Upper lobe of right lung (tissue), 1 donor: ENCODE measurements at regions of chr19 and their contacts with region 1.

Region 1: GRCh38 chr19:6297202-6297601 is 17.4 kb upstream of the MLLT1 start:
- DNase-seq: no peak
- ATAC-seq: no peak
- H3K4me3 ChIP-seq: no peak overlapping the region
- H3K27ac ChIP-seq: no peak overlapping the region
- H3K4me1 ChIP-seq: no peaks in the 10 kb centered on the region
- H3K27me3 ChIP-seq: no peaks in the 10 kb centered on the region
- CTCF ChIP-seq: no peak

Region 2: DNA sequence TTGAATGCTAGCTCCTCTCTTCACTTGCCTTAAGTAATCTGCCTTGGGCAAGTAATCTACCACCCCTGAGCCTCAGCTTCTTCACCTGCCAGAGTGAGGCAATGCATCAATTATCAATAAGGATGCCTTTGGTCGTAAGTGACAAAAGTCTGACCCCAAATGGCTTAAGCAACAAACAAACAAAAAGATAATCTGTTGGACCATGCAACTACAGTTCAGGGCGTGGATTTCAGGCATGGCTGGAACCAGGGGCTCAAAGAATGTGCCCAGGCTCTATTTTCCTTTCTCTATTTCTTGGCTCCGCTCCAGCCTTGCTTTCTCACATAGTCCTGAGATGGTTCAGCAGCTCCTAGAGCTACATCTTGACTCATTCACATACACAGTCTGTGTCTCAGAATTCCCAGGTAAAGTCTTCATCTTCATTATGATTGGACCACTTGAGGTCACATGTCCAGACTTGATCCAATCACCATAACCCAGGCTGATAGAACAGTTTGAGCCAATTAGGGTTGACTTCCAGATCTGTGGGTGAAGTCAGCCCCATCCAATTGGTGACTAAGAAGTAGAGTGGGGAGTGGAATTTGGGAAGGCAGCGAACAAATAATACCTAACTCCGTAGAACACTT is 132.2 kb before region 1 on chr19:
- intact Hi-C with region 1: loop called (anchors 5 kb)
- DNase-seq: no peak
- ATAC-seq: no peak
- H3K4me3 ChIP-seq: no peak overlapping the region
- H3K27ac ChIP-seq: no peak overlapping the region
- H3K4me1 ChIP-seq: no peaks in the 10 kb centered on the region
- H3K27me3 ChIP-seq: no peaks in the 10 kb centered on the region
- CTCF ChIP-seq: no peak

Region 3: DNA sequence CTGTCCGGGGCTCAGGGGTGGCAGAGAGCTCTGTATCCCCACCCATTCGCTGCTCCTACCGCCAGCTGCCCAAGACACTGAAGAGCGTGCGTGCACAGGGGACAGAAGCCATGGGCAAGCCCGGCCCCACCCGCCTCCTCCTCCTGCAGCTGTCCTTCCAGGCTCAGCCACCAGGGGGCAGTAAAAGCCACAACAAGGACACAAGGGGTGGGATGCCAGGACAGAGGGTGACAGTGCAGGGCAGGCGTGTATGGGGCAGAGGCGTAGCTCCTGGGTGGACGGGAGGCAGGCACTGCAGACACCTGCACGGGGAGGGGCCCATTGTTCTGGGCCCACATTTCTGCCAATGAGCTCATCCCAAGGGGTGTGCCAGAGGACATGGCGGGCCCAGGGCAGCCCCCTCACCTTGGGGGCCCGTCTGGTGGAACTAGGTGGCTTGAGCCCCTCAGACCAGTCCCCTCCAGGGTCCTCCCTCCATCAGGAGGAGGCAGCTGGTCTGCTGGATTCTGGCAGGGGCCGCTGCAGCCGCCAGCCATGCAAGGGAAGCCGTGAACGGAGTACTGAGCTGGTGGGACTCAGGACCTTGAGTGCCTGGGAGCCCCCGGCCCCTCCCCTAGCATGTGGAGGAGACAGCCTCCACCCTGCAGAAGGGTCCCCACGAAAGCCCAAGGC is 78.6 kb before region 1 on chr19:
- intact Hi-C with region 1: loop called (anchors 5 kb)
- DNase-seq: peak; percentile 92
- ATAC-seq: peak; percentile 84
- H3K4me3 ChIP-seq: no peak overlapping the region
- H3K27ac ChIP-seq: peak overlapping the region; percentile 36
- H3K4me1 ChIP-seq: peaks cover 41% of the 10 kb centered on the region
- H3K27me3 ChIP-seq: no peaks in the 10 kb centered on the region
- CTCF ChIP-seq: peak; percentile 98

Region 4: DNA sequence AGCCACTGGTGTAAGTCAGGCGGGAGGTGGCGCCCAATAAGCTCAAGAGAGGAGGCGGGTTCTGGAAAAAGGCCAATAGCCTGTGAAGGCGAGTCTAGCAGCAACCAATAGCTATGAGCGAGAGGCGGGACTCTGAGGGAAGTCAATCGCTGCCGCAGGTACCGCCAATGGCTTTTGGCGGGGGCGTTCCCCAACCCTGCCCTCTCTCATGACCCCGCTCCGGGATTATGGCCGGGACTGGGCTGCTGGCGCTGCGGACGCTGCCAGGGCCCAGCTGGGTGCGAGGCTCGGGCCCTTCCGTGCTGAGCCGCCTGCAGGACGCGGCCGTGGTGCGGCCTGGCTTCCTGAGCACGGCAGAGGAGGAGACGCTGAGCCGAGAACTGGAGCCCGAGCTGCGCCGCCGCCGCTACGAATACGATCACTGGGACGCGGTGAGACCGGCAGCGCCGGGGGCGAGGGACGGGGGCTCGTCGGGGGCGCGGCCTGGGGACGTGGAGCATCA is 75.4 kb after region 1 on chr19 and contains the start of gene ALKBH7:
- intact Hi-C with region 1: no loop called
- DNase-seq: peak; percentile 97
- ATAC-seq: peak; percentile 88
- H3K4me3 ChIP-seq: peak within 1 kb of the TSS; percentile 86
- H3K27ac ChIP-seq: peak within 1 kb of the TSS; percentile 94
- H3K4me1 ChIP-seq: no peaks in the 10 kb centered on the region
- H3K27me3 ChIP-seq: no peaks in the 10 kb centered on the region
- CTCF ChIP-seq: peak; percentile 9
- total RNA-seq, gene ALKBH7: 57.2 TPM